ENCODE measurements at regions of chr19 and their contacts with region 1.

Region 1: DNA sequence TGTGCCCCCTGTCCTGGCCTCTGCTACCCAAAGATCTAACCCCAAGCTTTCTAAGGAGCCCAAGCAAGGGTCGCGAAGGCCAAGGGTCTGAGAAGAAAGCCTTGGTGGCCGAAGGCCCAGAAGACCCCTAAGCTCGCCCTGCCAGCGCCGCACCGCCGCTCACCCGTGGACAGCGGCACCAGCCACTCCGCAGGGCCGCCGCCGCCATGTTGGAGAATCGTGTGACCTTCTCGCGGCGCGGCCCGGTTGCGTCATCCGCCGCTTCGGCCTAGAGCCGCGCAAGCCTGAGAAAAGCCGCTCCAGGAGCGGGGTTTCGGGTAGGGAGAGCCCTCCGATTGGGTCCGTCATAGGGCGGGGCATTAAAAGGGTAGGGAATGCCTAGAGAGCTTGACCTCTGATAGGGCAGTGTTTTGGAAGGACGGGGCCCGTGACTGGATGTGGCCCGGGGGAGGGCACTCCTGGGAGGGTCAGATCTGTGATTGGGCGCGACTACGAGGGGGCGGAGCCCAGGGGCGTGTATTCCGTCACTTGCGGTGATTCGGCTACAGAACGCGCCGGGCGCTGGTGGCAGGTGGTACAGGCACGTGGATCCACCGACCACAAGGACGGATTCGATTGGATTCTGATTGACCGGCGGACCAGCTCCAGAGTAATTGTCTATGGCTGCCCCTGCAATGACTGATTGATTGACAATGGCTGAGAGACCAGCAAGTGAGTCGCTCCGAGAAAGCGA is at the start of gene TIMM44:
- DNase-seq: peak; percentile 98 to 99 (median 99)
- H3K4me3 ChIP-seq: peak within 1 kb of the TSS; percentile 100
- H3K4me3 Mint-ChIP-seq: peak within 1 kb of the TSS; percentile 87 to 96 (median 91)
- H3K27ac ChIP-seq: peak within 1 kb of the TSS; percentile 98
- H3K27ac Mint-ChIP-seq: peak within 1 kb of the TSS; percentile 88 to 99 (median 96)
- H3K4me1 ChIP-seq: peaks cover 13% of the 10 kb centered on the region
- H3K4me1 Mint-ChIP-seq: peaks cover 23 to 45% (median 29%) of the 10 kb centered on the region in 3 donors
- H3K27me3 ChIP-seq: no peaks in the 10 kb centered on the region
- H3K27me3 Mint-ChIP-seq: peaks cover 0 to 2% of the 10 kb centered on the region in 2 donors
- total RNA-seq, gene TIMM44: 105 to 107 TPM

Region 2: GRCh38 chr19:7903244-7904073 is 40.2 kb before region 1 on chr19 and contains the start of gene MAP2K7:
- CTCF ChIA-PET with region 1: interaction called, 5 read pairs
- POLR2A ChIA-PET with region 1: interaction called, 10 read pairs
- DNase-seq: peak; percentile 100
- H3K4me3 ChIP-seq: peak within 1 kb of the TSS; percentile 86
- H3K4me3 Mint-ChIP-seq: peak within 1 kb of the TSS; percentile 85 to 98 (median 89)
- H3K27ac ChIP-seq: peak within 1 kb of the TSS; percentile 89
- H3K27ac Mint-ChIP-seq: peak within 1 kb of the TSS; percentile 94 to 100 (median 98)
- H3K4me1 ChIP-seq: peaks cover 35% of the 10 kb centered on the region
- H3K4me1 Mint-ChIP-seq: peaks cover 22 to 42% (median 28%) of the 10 kb centered on the region in 3 donors
- H3K27me3 ChIP-seq: no peaks in the 10 kb centered on the region
- H3K27me3 Mint-ChIP-seq: peaks cover 0 to 18% of the 10 kb centered on the region in 2 donors
- total RNA-seq, gene MAP2K7: 35.9 to 38.3 TPM

Region 3: GRCh38 chr19:7919610-7920518 is 23.7 kb before region 1 on chr19 and contains the start of gene SNAPC2:
- CTCF ChIA-PET with region 1: interaction called, 41 read pairs
- POLR2A ChIA-PET with region 1: interaction called, 42 read pairs
- DNase-seq: peak; percentile 93 to 98 (median 97)
- H3K4me3 ChIP-seq: peak within 1 kb of the TSS; percentile 81
- H3K4me3 Mint-ChIP-seq: peak within 1 kb of the TSS; percentile 84 to 95 (median 86)
- H3K27ac ChIP-seq: peak within 1 kb of the TSS; percentile 68
- H3K27ac Mint-ChIP-seq: peak within 1 kb of the TSS; percentile 85 to 97 (median 92)
- H3K4me1 ChIP-seq: peaks cover 39% of the 10 kb centered on the region
- H3K4me1 Mint-ChIP-seq: peaks cover 26 to 63% (median 32%) of the 10 kb centered on the region in 3 donors
- H3K27me3 ChIP-seq: peaks cover 18% of the 10 kb centered on the region
- H3K27me3 Mint-ChIP-seq: peaks cover 25 to 29% of the 10 kb centered on the region in 2 donors
- total RNA-seq, gene SNAPC2: 17.4 to 18.2 TPM

Region 4: DNA sequence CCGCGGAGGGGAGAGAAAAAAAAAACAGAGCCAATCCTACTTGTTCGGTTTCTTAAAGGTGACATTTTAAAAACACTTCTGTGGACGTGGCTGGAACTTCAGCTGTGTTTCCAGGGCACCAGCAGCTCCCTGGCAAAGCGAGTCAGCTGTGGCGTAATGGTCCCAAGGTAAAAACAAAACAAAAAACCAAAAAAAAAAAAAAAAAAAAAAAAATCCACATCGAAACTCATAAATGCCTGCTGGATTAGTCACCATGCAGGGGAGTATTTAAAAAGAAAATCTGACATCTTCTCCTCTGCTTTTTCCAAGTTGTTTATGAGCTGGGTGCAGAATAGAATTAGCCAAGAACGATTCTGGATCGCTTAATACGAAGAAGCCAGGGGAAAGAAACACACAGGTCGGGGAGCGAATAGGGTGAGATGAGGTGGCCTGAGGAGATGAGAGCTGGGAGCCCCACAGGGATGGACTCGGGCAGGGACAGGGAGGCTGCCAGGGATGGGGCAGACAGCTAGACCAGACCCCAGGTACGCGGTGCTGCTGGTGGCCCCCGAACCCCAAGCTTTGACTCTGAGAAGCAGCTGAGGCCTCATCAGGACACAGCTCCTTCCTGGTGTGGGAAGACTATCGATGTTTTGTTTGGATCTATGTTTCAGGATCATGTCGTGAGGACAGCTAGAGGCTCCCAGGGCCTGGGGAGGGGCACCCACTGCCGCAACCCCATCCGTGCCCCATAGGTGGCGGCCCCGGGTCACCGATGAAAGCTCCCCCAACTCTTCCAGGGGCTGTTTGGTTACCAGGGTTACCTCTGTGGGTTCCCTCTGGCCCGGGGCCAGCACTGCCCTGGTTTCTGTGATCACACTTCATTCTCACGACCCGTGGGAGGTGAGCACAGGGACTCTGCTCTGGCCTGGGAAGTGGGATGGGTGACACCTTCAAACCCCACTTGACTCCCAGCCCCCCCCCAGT is 14.6 kb before region 1 on chr19:
- CTCF ChIA-PET with region 1: interaction called, 41 read pairs
- POLR2A ChIA-PET with region 1: interaction called, 18 read pairs
- DNase-seq: peak; percentile 70 to 89 (median 77)
- H3K4me3 ChIP-seq: no peak overlapping the region
- H3K4me3 Mint-ChIP-seq: peak overlapping the region in 2 of 7 donors; percentile 59 to 74
- H3K27ac ChIP-seq: no peak overlapping the region
- H3K27ac Mint-ChIP-seq: peak overlapping the region in 7 of 8 donors; percentile 78 to 97 (median 80)
- H3K4me1 ChIP-seq: peaks cover 9% of the 10 kb centered on the region
- H3K4me1 Mint-ChIP-seq: peaks cover 9 to 24% (median 17%) of the 10 kb centered on the region in 3 donors
- H3K27me3 ChIP-seq: no peaks in the 10 kb centered on the region
- H3K27me3 Mint-ChIP-seq: no peaks in the 10 kb centered on the region

Region 5: DNA sequence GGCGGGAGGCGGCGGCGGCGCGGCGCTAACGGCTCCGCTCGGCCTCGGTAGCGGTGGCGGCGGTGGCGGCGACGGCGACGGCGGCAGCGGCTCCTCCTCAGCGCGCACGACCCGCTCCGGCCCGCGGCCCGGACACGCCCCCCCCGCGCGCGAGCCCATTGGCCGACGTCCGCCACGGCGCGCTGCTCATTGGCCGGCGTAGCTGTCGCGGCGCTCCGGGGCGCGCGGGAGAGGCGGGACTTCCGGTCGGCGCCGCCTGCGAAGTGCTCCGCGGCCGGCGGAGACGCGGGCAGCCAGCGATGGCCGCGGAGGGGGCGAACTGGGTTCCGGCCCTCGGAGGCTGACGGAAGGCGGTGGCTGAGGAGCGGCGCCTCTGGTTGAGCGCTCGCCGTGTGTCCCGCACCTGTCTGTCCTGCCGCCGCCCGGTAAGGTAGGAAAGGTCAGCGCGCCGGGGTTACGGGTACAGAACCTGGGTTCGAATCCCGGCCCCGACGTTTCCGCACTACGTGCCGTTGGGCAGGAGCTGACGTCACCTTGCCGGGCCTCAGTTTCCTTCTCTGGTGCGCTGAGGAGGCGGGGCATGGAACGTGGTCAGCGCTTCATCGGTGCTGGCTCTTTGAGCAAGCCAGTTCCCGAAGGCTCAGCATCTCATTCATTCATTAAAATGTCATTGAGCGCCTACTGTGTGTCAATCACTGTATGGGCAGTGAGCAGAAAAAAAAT is 62.1 kb after region 1 on chr19 and contains the start of gene ELAVL1:
- CTCF ChIA-PET with region 1: interaction called, 28 read pairs
- POLR2A ChIA-PET with region 1: interaction called, 9 read pairs
- DNase-seq: peak; percentile 88 to 90 (median 88)
- H3K4me3 ChIP-seq: peak within 1 kb of the TSS; percentile 76
- H3K4me3 Mint-ChIP-seq: peak within 1 kb of the TSS; percentile 89 to 98 (median 94)
- H3K27ac ChIP-seq: peak within 1 kb of the TSS; percentile 72
- H3K27ac Mint-ChIP-seq: peak within 1 kb of the TSS; percentile 82 to 98 (median 96)
- H3K4me1 ChIP-seq: peaks cover 32% of the 10 kb centered on the region
- H3K4me1 Mint-ChIP-seq: peaks cover 37 to 42% (median 38%) of the 10 kb centered on the region in 3 donors
- H3K27me3 ChIP-seq: no peaks in the 10 kb centered on the region
- H3K27me3 Mint-ChIP-seq: peaks cover 0 to 2% of the 10 kb centered on the region in 2 donors
- total RNA-seq, gene ELAVL1: 156 to 164 TPM